Endothelial cell of umbilical vein (primary cell): ENCODE measurements at regions of chr9 and their contacts with region 1.

Region 1: DNA sequence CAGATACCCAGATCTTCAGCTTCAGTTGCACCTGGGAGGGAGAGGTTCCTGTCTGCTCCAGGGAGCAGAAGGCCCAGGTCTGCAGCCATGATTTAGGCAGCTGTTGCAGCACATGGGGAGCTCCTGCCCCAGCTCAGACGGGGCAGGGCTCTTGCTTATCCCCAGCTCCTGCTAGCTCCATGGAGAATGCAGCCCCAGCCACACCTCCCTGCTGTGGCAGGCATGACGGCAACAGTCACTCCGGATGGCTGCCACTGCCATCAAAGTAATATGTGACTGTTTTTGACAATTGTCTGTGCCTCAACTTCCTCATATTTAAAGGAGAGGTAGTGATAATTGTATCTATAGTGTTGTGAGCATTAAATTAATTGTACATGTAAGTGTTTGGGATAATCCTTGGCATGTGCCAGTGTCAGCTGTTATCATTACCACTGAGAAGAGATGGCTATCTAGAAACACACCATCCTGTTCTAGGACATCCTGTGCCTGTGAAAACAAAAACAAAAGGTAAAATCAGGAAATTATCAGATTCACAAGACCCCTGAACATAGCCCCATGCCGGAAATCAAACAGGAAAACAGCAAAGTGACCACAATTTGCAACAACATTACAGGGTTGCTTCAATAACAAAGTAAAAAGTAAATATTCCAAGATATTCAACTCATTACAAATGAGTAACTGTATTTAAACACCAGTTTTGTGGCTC is 1048.8 kb upstream of the ACO1 start:
- DNase-seq: peak; percentile 75
- H3K4me3 ChIP-seq: no peak overlapping the region
- H3K27ac ChIP-seq: peak overlapping the region; percentile 41
- H3K4me1 ChIP-seq: peaks cover 20% of the 10 kb centered on the region
- H3K27me3 ChIP-seq: no peaks in the 10 kb centered on the region
- CTCF ChIP-seq: no peak
- POLR2A ChIP-seq: no peak

Region 2: DNA sequence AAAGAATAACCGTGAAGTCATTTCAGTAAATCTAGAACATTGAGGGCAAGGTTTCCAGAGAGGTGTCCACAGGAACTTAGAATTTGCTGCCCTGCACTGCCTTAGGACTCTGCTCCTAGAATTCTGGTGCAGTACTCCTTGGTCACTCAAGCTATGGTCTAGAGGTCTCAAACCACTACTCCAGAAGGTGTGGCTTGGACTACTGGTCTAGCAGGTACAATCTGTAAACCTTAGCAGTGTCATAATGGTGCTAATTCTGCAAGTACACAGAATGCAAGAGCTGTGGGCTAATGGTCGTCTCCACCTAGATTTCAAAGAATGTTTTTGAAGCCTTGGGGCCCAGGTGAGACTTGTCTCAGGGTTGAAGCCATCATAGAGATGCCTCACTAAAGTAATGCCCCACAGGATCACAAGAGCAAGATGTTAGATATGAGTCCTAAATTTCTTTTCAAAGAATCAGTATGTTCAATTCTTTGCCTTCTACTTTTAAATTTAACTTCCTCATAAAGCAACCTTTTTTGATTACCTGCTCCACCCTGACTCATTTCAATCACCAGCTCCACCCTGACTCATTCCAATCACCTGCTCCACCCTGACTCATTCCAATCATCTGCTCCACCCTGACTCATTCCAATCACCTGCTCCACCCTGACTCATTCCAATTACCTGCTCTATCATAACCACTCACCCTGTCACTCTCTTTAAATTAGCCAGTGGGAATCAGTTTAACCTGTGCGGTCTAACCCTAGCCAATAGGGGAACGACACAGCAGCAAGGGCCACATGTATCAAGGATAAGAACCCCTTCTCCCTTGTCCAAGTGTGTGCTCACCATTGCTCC is 63.0 kb before region 1 on chr9:
- CTCF ChIA-PET with region 1: no interaction called
- POLR2A ChIA-PET with region 1: no interaction called
- dilution Hi-C with region 1: no loop called
- intact Hi-C with region 1: loop called (anchors 10 kb)
- DNase-seq: no peak
- H3K4me3 ChIP-seq: no peak overlapping the region
- H3K27ac ChIP-seq: no peak overlapping the region
- H3K4me1 ChIP-seq: no peaks in the 10 kb centered on the region
- H3K27me3 ChIP-seq: no peaks in the 10 kb centered on the region
- CTCF ChIP-seq: no peak
- POLR2A ChIP-seq: no peak

Region 3: GRCh38 chr9:31304576-31304975 is 31.1 kb before region 1 on chr9:
- CTCF ChIA-PET with region 1: interaction called, 4 read pairs
- POLR2A ChIA-PET with region 1: no interaction called
- dilution Hi-C with region 1: no loop called
- intact Hi-C with region 1: loop called (anchors 2 kb)
- DNase-seq: peak; percentile 95
- H3K4me3 ChIP-seq: no peak overlapping the region
- H3K27ac ChIP-seq: peak overlapping the region; percentile 83
- H3K4me1 ChIP-seq: peaks cover 25% of the 10 kb centered on the region
- H3K27me3 ChIP-seq: no peaks in the 10 kb centered on the region
- CTCF ChIP-seq: no peak
- POLR2A ChIP-seq: peak; percentile 39

Region 4: DNA sequence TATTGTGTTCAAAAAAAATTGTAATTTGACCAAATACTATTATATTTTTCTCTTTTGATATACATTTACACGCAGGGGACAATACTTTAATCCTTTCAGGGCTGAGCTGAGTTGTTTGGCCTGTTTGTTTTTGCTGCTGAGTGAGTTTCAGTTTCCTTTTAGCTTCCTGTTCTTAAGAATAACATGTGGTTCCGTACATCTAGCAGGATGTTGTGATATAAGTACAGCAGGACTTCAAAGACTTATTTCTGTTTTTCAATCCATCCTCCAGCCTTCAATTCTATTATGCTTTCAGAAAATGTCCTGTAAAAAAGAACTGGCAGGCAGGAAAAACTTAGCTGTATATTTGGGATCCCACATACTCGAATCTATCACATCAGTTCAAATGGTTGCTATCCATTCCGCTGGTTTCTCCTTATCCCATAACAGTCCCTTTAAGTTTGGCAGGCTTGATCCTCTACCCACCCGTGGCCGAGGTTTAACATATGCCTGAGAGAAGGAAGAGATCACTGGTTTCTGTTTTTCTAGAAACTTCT is 11.5 kb after region 1 on chr9:
- CTCF ChIA-PET with region 1: no interaction called
- POLR2A ChIA-PET with region 1: no interaction called
- dilution Hi-C with region 1: no loop called
- intact Hi-C with region 1: loop called (anchors 1 kb)
- DNase-seq: peak; percentile 83
- H3K4me3 ChIP-seq: peak overlapping the region in 1 of 3 experiments; percentile 58
- H3K27ac ChIP-seq: peak overlapping the region; percentile 73
- H3K4me1 ChIP-seq: peaks cover 21% of the 10 kb centered on the region
- H3K27me3 ChIP-seq: no peaks in the 10 kb centered on the region
- CTCF ChIP-seq: no peak
- POLR2A ChIP-seq: no peak

Region 5: GRCh38 chr9:31554941-31555340 is 219.3 kb after region 1 on chr9:
- CTCF ChIA-PET with region 1: no interaction called
- POLR2A ChIA-PET with region 1: no interaction called
- dilution Hi-C with region 1: no loop called
- intact Hi-C with region 1: no loop called
- DNase-seq: no peak
- H3K4me3 ChIP-seq: no peak overlapping the region
- H3K27ac ChIP-seq: no peak overlapping the region
- H3K4me1 ChIP-seq: peaks cover 3% of the 10 kb centered on the region
- H3K27me3 ChIP-seq: no peaks in the 10 kb centered on the region
- CTCF ChIP-seq: no peak
- POLR2A ChIP-seq: no peak

Region 6: DNA sequence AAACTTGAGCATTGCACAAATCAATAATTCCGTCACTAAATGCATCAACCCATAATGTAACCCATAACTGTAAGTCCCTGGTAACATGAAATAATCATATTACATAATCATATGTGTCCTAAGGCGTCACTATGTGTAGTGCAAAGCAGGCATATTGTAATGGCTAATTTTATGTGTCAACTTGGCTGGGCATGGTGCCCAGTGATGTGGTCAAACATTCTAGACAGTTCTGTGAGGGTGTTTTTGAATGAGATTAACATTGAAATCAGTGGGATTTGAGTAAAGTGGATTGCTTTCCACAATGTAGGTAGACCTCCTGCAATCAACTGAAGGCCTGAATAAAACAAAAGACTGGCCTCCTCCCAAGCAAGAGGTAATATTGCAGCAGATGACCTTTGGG is 254.4 kb after region 1 on chr9:
- CTCF ChIA-PET with region 1: no interaction called
- POLR2A ChIA-PET with region 1: no interaction called
- dilution Hi-C with region 1: no loop called
- intact Hi-C with region 1: no loop called
- DNase-seq: no peak
- H3K4me3 ChIP-seq: no peak overlapping the region
- H3K27ac ChIP-seq: no peak overlapping the region
- H3K4me1 ChIP-seq: no peaks in the 10 kb centered on the region
- H3K27me3 ChIP-seq: no peaks in the 10 kb centered on the region
- CTCF ChIP-seq: no peak
- POLR2A ChIP-seq: no peak